ENCODE measurements at regions of chr7 and their contacts with region 1.

Region 1: DNA sequence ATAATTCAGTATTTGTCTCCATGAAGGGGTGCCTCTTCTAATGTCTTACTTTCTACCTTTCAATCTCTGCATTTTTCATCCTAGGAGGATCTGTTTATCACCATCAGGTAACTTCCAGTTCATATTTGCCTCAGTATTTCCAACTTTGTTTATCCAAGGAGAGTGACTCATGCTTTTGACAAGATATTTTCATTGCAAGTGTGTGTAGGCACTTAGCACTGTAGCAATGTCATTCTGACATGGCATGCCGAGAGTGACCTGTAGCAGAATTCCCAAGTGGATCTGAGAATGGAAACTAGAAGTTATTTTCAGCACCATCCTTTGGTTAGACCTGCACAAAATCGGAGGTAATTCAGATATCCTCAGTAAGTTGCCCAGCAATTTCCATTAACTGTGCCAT is 129.9 kb downstream of the INHBA start:
- DNase-seq: peak; percentile 84
- H3K4me3 ChIP-seq: no peak overlapping the region
- H3K27ac ChIP-seq: peak overlapping the region; percentile 96
- H3K4me1 ChIP-seq: peaks cover 48% of the 10 kb centered on the region
- H3K27me3 ChIP-seq: no peaks in the 10 kb centered on the region
- CTCF ChIP-seq: no peak
- POLR2A ChIP-seq: peak; percentile 33

Region 2: GRCh38 chr7:41508755-41509154 is 64.3 kb before region 1 on chr7:
- CTCF ChIA-PET with region 1: interaction called, 3 read pairs
- POLR2A ChIA-PET with region 1: no interaction called
- dilution Hi-C with region 1: no loop called
- intact Hi-C with region 1: loop called (anchors 1 kb)
- DNase-seq: peak; percentile 72
- H3K4me3 ChIP-seq: no peak overlapping the region
- H3K27ac ChIP-seq: peak overlapping the region; percentile 46
- H3K4me1 ChIP-seq: peaks cover 13% of the 10 kb centered on the region
- H3K27me3 ChIP-seq: no peaks in the 10 kb centered on the region
- CTCF ChIP-seq: no peak
- POLR2A ChIP-seq: no peak

Region 3: GRCh38 chr7:41559426-41559825 is 13.6 kb before region 1 on chr7:
- CTCF ChIA-PET with region 1: interaction called, 3 read pairs
- POLR2A ChIA-PET with region 1: no interaction called
- dilution Hi-C with region 1: no loop called
- intact Hi-C with region 1: loop called (anchors 1 kb)
- DNase-seq: no peak
- H3K4me3 ChIP-seq: no peak overlapping the region
- H3K27ac ChIP-seq: no peak overlapping the region
- H3K4me1 ChIP-seq: no peaks in the 10 kb centered on the region
- H3K27me3 ChIP-seq: no peaks in the 10 kb centered on the region
- CTCF ChIP-seq: no peak
- POLR2A ChIP-seq: no peak